ENCODE measurements at regions of chr2 and their contacts with region 1.

Region 1: GRCh38 chr2:128494640-128495321 is 176.1 kb upstream of the HS6ST1 start:
- DNase-seq: no peak
- ATAC-seq: peak; percentile 86

Region 2: DNA sequence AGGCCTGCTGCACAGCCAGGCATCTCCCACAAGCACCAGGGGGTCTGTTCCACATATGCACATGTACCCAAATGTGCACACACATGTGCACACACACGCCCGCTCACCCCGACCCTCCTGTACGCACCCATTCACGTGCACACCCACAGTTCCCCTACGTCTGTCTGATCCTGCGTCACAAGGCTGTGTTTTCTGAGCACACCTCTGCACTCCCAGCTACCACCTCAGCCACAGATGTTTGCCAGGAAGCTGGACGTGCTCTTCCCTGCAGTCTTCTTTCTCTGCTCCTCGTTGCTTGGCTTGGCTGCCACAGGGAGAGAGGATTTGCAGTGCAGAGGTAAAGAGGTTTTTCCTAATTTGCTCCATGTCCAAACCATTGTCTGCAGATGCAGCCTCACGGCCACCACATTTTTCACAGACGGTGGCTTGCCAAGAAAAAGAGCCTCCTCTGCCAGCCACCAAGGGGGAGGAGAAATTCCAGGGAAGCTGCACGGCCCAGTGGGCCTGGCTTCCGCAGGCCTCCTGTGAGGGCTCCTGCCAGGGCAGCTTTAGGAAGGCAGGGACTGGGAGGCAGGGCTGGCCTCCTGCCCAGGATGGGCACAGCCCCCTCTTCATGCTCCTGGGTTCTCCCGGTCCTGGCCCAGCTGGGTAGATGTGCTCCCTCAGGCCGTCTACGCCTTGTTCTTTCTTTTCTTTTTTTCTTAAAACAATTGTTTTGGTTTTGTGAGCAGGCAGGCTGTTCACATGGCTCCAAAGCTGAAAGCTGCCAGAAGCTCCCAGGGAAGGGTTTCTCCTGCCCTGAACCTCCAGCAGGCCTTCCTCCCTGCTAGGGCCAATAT is 146.9 kb before region 1 on chr2:
- intact Hi-C with region 1: loop called (anchors 2 kb)
- DNase-seq: peak; percentile 86
- ATAC-seq: peak; percentile 96

Region 3: DNA sequence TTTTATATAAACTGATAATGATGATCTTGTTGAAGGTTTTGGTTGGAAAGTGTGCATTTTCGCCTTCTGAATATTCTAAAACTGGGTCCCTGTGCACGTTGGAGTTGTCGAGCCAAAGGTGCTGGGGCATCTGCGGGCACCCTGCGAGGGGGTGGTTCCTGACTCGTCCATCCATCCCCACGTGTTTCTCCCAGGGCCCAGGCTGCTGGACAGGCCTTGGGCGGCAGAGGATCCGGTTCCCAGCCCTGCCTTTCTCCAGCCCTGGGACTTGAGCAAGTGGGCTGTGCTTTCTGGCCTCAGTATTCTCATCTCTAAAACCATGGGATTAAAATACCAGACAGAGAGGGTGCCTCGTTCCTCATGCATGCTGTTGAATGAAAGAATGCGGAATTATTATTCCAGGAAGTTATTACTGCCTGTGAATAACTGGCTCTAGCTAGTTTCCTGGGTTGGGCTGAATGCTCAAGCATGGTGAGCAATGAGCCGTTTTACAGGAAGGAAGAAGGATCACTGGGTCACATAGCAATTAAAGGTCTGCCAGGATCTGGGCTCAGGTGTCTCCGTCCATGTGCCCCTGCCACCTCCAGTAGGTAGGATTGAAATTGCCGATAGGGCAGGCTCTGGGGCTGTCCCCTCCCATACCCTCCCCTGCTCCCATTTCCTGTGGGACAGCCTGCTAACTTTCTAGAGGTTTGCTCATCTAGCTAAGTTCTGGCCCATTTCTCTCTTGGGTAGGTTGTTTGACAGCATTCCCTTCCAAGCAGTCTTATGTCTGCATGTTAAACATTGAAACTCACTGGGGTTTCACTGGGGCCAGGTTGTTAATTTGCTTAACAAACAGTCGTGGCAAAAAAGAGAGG is 98.9 kb before region 1 on chr2:
- intact Hi-C with region 1: no loop called
- DNase-seq: no peak
- ATAC-seq: no peak

Region 4: DNA sequence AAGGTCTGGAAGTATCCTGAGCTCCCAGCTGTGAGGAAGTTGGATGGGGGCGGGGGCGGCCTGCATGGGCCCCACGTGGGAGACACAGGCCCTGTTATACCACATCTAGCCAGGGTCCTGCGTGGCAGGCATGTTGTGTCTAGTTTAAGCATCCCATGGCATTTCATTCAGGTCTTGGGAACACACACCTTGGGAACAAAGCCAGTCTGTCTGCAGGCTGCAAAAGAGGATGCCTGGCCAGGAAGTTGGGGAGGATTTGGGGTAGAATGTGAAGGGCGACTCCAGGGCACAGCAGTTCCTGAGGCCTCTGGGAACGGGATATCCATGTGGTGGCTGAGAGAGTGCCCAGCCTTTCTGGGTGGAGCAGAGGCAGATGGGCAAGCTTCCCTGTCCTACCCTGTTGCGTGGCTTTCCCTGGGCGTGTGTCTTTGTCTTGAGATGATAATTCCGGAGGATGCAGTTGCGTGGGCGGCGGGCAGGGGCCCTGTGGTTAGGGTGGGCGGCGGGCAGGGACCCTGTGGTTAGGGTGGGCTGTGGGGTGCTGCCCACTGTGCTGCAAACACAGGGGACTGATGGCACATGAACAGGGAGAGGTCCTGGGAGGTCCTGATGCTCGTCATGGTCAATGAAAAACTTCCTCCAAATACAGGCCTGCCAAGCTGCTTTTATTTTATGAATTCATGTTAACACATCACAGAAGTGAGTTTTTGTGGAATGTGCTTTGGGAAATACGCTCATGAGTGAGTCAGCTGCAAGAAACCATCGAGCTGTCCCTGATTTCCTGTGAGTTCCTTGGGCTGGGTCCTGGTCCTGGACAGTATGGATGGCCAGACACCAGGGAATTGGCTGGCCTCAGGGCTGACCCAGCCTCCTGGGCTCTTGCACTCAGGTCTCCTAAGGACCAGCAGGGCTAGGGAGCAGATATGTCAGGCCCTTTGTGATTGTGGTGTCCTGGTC is 86.2 kb before region 1 on chr2:
- intact Hi-C with region 1: no loop called
- DNase-seq: no peak
- ATAC-seq: no peak

Region 5: DNA sequence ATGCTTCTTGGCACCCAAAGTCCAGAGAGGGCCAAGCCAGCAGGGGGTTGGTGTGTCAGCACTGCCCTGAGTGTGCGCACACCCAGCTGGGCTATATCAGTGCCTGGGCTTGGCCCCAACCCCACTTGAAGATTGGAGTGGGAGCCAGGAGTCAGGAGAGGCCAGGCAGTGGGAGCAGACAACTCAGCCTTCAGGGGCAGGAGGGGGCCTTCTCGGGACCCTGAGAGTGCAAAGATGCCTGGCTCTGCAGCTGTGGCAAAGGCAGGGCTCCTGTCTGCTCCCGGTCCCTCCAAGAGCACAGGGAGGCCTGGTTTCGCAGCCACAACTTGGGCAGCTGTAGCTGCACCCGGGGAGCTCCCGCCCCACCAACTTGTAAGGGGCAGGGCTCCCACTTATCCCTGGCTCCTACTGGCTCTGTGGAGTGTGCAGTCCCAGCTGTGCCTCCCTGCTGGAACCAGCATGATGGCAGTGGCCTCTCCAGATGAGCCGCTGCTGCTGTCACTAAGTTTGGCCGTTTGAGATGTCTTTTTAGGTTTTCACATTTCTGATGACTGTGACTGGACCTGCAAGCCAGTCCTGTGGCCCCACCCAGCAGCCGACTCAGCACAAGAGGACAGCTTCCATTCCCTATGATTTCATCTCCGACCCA is 27.3 kb before region 1 on chr2:
- intact Hi-C with region 1: loop called (anchors 1 kb)
- DNase-seq: peak; percentile 85
- ATAC-seq: peak; percentile 85

Measured in Right ventricle myocardium inferior (tissue), 1 donor.